ENCODE measurements at regions of chr12 and their contacts with region 1.

Region 1: DNA sequence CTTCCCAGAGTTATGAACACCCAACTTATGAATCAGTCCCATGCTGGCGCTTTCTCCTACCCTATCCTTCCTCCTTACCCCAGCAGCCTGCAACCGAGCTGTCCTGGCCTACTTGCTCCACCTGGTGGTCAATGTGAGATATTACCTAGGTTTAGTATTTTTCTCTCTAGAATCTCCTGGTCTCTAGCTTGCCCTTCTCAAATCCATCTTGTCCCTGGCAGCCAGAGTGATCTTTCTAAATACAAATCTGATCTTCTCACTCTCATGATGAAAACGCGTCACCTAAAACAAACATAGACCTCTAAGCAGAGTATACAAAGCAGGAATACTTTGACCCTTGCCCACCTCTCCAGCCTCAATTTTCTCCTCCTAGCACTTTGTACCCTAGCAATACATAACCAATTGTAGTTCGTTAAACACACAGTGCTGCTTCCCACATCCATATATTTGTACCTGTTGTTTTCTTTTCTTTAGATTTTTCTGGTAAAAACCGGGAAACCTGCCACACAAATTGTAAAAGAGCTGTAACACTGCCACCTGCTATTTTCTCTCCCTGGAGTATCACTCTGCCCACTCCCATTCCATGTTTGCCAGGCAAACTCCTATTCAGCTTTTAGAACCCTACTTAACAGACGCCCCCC is 20.0 kb upstream of the TCP11L2 start:
- DNase-seq: peak; percentile 48
- H3K4me3 ChIP-seq: no peak overlapping the region
- H3K27ac ChIP-seq: no peak overlapping the region
- H3K4me1 ChIP-seq: peaks cover 6% of the 10 kb centered on the region
- H3K27me3 ChIP-seq: peaks cover 4 to 9% of the 10 kb centered on the region in 2 experiments
- CTCF ChIP-seq: peak; percentile 65 to 70
- POLR2A ChIP-seq: no peak

Region 2: GRCh38 chr12:106296193-106296877 is 13.8 kb after region 1 on chr12:
- CTCF ChIA-PET with region 1: interaction called, 20 read pairs
- POLR2A ChIA-PET with region 1: interaction called, 3 read pairs
- dilution Hi-C with region 1: no loop called
- intact Hi-C with region 1: no loop called
- DNase-seq: no peak
- H3K4me3 ChIP-seq: no peak overlapping the region
- H3K27ac ChIP-seq: no peak overlapping the region
- H3K4me1 ChIP-seq: peaks cover 6% of the 10 kb centered on the region
- H3K27me3 ChIP-seq: peaks cover 0 to 2% of the 10 kb centered on the region in 2 experiments
- CTCF ChIP-seq: no peak
- POLR2A ChIP-seq: no peak

Region 3: DNA sequence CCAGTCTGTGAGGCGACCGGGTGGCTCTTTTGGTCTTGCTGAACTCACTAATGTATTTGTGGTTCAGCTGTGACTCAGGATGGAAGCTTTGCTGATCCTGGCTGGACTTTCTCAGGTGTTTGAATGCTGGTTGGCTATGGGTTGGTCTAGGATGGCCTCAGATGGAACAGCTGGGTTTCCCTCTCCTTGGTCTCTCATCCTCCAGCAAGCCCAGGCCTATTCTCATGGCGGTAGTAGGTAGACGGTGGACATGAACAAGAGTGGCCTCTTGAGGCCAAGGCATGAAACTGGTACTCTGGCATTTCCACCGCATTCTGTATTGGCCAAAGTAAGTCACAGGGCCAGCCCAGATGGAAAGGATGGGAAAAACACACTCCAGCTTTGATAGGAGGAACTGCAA is 63.2 kb after region 1 on chr12:
- CTCF ChIA-PET with region 1: interaction called, 6 read pairs
- POLR2A ChIA-PET with region 1: no interaction called
- dilution Hi-C with region 1: no loop called
- intact Hi-C with region 1: loop called (anchors 5 kb)
- DNase-seq: peak; percentile 67
- H3K4me3 ChIP-seq: no peak overlapping the region
- H3K27ac ChIP-seq: no peak overlapping the region
- H3K4me1 ChIP-seq: no peaks in the 10 kb centered on the region
- H3K27me3 ChIP-seq: peaks cover 3 to 5% of the 10 kb centered on the region in 2 experiments
- CTCF ChIP-seq: peak; percentile 33 to 54
- POLR2A ChIP-seq: no peak

Measured in endothelial cell of umbilical vein (primary cell).